IMR-90 (cell line): ENCODE measurements at regions of chr2 and their contacts with region 1.

Region 1: DNA sequence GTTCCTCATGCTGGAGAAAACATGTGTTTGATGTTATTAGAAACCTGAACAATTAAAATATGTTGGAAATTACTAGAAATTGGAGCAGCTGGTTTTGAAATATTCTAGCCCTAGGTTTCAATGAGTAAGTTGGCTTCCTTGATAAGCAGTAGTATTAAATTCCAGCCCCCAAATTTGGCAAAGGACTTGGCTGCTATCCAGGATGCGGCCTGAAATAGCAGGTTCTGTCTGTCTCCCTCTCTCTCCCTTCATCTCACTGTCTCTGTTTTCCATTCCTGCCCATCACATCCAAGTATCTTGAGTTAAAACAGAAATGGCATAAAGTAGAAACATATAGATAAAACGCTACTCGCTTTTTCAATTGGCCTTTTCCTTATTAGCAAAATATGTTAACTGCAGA is 20.9 kb upstream of the GPR45 start:
- DNase-seq: no peak
- ATAC-seq: no peak
- H3K4me3 ChIP-seq: no peak overlapping the region
- H3K27ac ChIP-seq: no peak overlapping the region
- H3K4me1 ChIP-seq: no peaks in the 10 kb centered on the region
- H3K27me3 ChIP-seq: peaks cover 32% of the 10 kb centered on the region
- CTCF ChIP-seq: no peak
- POLR2A ChIP-seq: no peak
- RAD21 ChIP-seq: no peak

Region 2: DNA sequence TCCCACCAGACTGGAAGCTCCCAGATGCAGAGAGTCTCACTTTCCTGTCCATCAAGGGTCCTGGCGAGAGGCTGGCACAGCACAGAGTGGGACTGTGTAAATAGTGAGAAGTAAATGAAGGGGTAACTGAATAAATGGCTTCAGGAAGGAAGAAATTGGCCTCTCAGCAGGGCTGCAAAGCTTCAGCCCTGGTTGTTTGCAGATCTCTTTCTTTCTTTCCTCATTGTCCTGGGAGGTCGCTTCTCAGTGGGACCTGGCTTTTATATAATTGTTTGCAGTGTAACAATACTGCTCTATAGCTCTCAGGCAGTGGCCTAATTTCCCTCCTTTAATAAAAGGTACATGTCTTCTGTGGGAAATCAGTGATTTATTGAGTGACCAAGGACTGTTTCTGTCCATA is 53.9 kb before region 1 on chr2:
- CTCF ChIA-PET with region 1: no interaction called
- POLR2A ChIA-PET with region 1: no interaction called
- dilution Hi-C with region 1: no loop called
- in situ Hi-C with region 1: no loop called
- intact Hi-C with region 1: loop called (anchors 10 kb)
- DNase-seq: no peak
- ATAC-seq: no peak
- H3K4me3 ChIP-seq: no peak overlapping the region
- H3K27ac ChIP-seq: no peak overlapping the region
- H3K4me1 ChIP-seq: no peaks in the 10 kb centered on the region
- H3K27me3 ChIP-seq: peaks cover 7% of the 10 kb centered on the region
- CTCF ChIP-seq: no peak
- POLR2A ChIP-seq: no peak
- RAD21 ChIP-seq: no peak